ENCODE measurements at regions of chr11 and their contacts with region 1.

Region 1: GRCh38 chr11:75150879-75151278 is at the start of gene SLCO2B1:
- DNase-seq: peak; percentile 66
- ATAC-seq: peak; percentile 60
- total RNA-seq, gene SLCO2B1: 30.1 TPM

Region 2: DNA sequence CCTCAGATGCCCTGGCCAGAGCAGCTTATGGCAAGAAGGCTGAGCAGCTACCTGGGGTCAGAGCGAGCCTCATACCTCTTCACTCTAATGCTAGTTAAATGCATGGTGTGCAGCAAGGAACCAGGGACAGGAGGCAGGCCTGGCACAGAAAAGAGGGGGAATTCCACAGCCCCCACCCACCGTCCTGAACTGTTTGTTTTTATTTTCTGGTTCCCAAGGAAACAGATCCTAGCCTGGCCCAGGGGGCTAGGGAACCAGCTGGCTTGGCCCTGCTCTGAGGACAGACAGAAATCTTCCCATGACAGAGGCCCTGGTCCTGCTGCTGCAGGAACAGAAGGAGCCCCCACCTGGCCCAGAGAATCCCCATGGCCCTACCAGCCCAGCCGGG is 40.4 kb after region 1 on chr11:
- intact Hi-C with region 1: loop called (anchors 5 kb)
- DNase-seq: no peak
- ATAC-seq: peak; percentile 7

Measured in left ventricle myocardium superior (tissue), 1 donor.